Ascending aorta (tissue), 2 donors: ENCODE measurements at regions of chr10 and their contacts with region 1.

Region 1: GRCh38 chr10:80144067-80144695 is 11.7 kb downstream of the PLAC9 start:
- DNase-seq: no peak
- H3K4me3 ChIP-seq: no peak overlapping the region
- H3K27ac ChIP-seq: peak overlapping the region; percentile 50 to 54
- H3K4me1 ChIP-seq: peaks cover 5 to 15% of the 10 kb centered on the region in 2 donors
- H3K27me3 ChIP-seq: no peaks in the 10 kb centered on the region
- CTCF ChIP-seq: no peak

Region 2: DNA sequence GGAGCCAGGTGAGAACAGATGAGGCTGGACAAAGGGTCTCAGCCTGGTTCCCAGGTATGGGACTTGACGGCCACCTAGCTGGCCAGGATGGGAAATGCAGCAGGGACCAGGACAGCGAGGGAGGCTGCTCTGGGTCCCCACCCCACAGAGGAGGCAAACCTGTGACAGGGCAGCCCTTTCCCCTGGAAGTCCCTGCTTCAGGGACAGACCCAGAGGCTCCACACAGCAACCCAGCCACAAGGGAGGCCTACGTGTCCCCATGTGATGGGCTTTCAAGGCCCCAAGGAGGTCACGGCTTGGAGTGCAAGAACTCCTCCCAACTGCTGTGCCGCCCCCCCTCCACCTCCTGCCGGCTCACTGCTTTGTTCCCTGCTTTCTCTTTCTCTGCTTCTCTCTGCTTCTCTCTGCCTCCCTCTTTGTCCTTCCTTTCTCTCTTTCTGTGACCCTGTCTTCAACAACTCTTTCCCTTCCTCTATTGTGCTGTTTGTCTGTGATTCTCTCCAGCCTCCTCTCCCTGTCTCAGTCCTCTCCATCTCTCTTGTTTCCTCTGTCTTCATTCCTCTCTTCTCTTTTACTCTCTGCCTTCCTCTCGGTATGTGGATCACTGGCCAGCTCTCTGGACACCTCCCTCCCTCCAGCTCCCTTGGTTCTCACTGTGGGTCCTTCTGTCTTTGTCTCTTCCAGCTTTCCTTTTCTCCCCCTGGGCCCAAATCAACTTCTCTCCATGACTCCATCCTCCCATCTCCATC is 641.4 kb before region 1 on chr10:
- intact Hi-C with region 1: loop called (anchors 10 kb)
- DNase-seq: no peak
- H3K4me3 ChIP-seq: no peak overlapping the region
- H3K27ac ChIP-seq: no peak overlapping the region
- H3K4me1 ChIP-seq: no peaks in the 10 kb centered on the region
- H3K27me3 ChIP-seq: no peaks in the 10 kb centered on the region
- CTCF ChIP-seq: peak in 1 of 3 experiments; percentile 42

Region 3: DNA sequence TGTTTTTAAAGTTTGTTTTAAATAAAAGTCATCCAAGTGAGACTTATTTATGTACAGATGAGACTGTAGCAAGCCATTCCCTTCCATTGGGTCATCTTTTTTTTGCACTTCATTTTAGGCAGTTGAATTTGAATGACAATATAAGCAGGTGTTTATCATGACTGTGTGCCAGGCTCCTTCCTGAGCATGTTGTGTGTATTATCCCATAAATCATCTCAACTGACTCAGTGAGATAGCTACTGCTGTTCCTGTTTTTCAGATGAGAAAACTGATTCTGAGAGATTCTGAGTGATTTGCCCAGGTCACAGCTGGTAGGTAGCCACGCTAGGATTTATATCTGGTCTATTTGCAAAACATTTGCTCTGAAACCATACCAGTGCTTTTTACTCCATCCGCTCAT is 54.1 kb before region 1 on chr10:
- intact Hi-C with region 1: no loop called
- DNase-seq: no peak
- H3K4me3 ChIP-seq: no peak overlapping the region
- H3K27ac ChIP-seq: no peak overlapping the region
- H3K4me1 ChIP-seq: no peaks in the 10 kb centered on the region
- H3K27me3 ChIP-seq: no peaks in the 10 kb centered on the region
- CTCF ChIP-seq: no peak

Region 4: GRCh38 chr10:81157681-81158080 is 1013.5 kb after region 1 on chr10:
- intact Hi-C with region 1: no loop called
- DNase-seq: no peak
- H3K4me3 ChIP-seq: no peak overlapping the region
- H3K27ac ChIP-seq: no peak overlapping the region
- H3K4me1 ChIP-seq: no peaks in the 10 kb centered on the region
- H3K27me3 ChIP-seq: no peaks in the 10 kb centered on the region
- CTCF ChIP-seq: no peak